ENCODE measurements at regions of chr11 and their contacts with region 1.

Region 1: GRCh38 chr11:111878849-111879636 is at the starts of genes CFAP68 and FDXACB1:
- DNase-seq: peak; percentile 97
- ATAC-seq: peak; percentile 95
- H3K4me3 ChIP-seq: peak within 1 kb of the TSS; percentile 71
- H3K27ac ChIP-seq: peak within 1 kb of the TSS; percentile 88
- H3K4me1 ChIP-seq: peaks cover 3% of the 10 kb centered on the region; the same call in 1 of the 2 replicates
- H3K27me3 ChIP-seq: no peaks in the 10 kb centered on the region
- CTCF ChIP-seq: peak; percentile 99
- POLR2A ChIP-seq: peak; percentile 34; the same call in 1 of the 2 replicates
- RAD21 ChIP-seq: peak; percentile 97
- total RNA-seq, gene CFAP68: 8.9 and 10.2 TPM in 2 replicates
- total RNA-seq, gene FDXACB1: 3.0 and 3.3 TPM in 2 replicates

Region 2: DNA sequence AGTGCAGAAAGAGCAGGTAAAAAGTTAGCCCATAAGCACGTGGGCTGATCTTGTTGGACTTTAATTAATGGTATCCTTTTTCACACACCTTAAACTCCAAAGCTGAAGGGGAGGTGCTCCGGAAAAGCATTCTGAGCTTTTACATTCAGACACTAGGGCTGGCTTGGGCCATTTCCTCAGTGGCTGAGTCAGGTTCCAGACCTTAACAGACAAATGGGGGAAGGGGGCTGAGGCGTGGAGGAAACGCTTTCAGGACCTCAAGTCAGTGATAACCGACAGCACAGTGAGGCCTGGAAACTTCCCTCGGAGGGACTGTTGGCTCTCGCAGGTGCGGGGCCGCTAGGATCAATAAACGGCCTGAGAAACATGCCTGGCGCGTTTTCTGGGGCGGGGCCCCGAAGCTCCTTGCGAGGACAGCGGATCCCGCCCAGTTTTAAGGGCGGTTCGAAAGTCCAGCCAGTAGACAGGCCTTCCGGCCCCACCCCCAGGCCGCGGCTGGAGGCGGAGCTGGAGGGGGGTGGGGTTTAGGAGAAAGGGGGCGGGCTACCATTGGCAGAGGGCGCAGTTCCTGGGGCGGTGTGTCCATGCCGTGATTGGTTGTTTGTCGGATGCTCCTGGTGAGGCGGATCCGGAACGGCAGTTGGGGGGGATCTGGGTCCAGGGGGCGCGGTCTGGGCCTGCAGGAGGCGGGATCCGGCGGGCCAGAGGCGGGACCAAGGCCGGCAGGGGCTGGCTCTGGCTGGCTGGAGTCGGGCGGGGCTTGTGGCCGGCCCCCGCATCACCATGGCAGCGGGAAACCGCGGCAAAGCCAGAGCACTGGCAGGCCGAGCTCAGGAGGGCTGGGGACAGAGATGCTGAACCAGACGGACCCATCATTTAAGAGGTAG is 47.7 kb after region 1 on chr11:
- CTCF ChIA-PET with region 1: interaction called, 5 read pairs
- POLR2A ChIA-PET with region 1: no interaction called
- dilution Hi-C with region 1: no loop called
- in situ Hi-C with region 1: loop called (anchors 5 kb)
- intact Hi-C with region 1: loop called (anchors 2 kb)
- DNase-seq: peak; percentile 96
- ATAC-seq: peak; percentile 95
- H3K4me3 ChIP-seq: peak overlapping the region; percentile 46
- H3K27ac ChIP-seq: peak overlapping the region; percentile 79
- H3K4me1 ChIP-seq: peaks cover 12% of the 10 kb centered on the region
- H3K27me3 ChIP-seq: no peaks in the 10 kb centered on the region
- CTCF ChIP-seq: no peak
- POLR2A ChIP-seq: peak; percentile 74
- RAD21 ChIP-seq: no peak

Region 3: GRCh38 chr11:111938687-111939160 is 59.7 kb after region 1 on chr11:
- CTCF ChIA-PET with region 1: no interaction called
- POLR2A ChIA-PET with region 1: no interaction called
- dilution Hi-C with region 1: no loop called
- in situ Hi-C with region 1: no loop called
- intact Hi-C with region 1: loop called (anchors 2 kb)
- DNase-seq: peak; percentile 63
- ATAC-seq: peak; percentile 40
- H3K4me3 ChIP-seq: peak overlapping the region; percentile 1; the same call in 1 of the 2 replicates
- H3K27ac ChIP-seq: peak overlapping the region; percentile 53
- H3K4me1 ChIP-seq: peaks cover 28% of the 10 kb centered on the region
- H3K27me3 ChIP-seq: no peaks in the 10 kb centered on the region
- CTCF ChIP-seq: no peak
- POLR2A ChIP-seq: peak; percentile 44; the same call in 1 of the 2 replicates
- RAD21 ChIP-seq: no peak

Region 4: GRCh38 chr11:111992206-111992855 is 113.3 kb after region 1 on chr11:
- CTCF ChIA-PET with region 1: interaction called, 3 read pairs
- POLR2A ChIA-PET with region 1: no interaction called
- dilution Hi-C with region 1: no loop called
- in situ Hi-C with region 1: loop called (anchors 5 kb)
- intact Hi-C with region 1: loop called (anchors 1 kb)
- DNase-seq: no peak
- ATAC-seq: no peak
- H3K4me3 ChIP-seq: no peak overlapping the region
- H3K27ac ChIP-seq: no peak overlapping the region
- H3K4me1 ChIP-seq: peaks cover 2% of the 10 kb centered on the region
- H3K27me3 ChIP-seq: no peaks in the 10 kb centered on the region
- CTCF ChIP-seq: no peak
- POLR2A ChIP-seq: no peak
- RAD21 ChIP-seq: no peak

Region 5: DNA sequence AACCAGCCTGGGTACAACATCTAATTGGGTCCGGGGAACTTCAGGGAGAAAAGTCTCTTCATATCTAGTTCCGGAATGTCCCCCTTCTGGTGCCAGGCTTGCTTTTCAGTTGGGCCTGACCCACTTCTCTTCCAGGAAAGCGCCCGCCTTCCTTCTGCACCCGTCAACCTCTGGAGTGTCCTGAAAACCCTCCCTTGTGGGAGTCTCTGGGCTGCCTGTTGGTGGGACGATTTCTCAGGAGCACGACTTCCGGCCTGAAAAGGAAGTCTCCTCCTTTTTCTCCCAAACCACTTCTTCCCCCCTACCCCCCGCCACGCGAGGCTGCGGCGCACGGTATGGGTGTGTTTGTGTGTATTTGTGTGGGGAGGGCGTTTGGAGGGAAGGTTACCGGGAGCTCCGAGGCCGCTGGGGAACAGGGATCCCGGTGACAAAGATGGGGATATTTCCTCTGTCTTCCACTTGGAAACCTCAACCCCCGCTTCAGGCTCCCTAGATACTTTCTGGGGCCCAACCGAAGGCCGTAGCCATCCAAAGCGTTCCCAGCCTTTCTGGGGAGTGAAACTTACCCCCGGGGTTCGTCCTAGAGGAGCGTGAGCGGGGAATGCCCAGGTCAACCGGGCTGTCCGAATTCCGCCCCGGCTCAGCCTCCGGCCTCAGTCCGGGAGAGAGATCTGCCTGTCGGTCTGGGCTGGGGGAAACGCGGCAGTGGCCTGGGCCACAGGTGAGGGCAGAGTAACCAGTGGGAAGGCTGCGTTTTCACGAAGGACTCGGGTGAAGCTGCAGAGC is 195.2 kb after region 1 on chr11 and contains the start of gene NKAPD1:
- CTCF ChIA-PET with region 1: no interaction called
- POLR2A ChIA-PET with region 1: no interaction called
- dilution Hi-C with region 1: no loop called
- in situ Hi-C with region 1: no loop called
- intact Hi-C with region 1: loop called (anchors 2 kb)
- DNase-seq: peak; percentile 88
- ATAC-seq: peak; percentile 94
- H3K4me3 ChIP-seq: peak within 1 kb of the TSS; percentile 80
- H3K27ac ChIP-seq: peak within 1 kb of the TSS; percentile 85
- H3K4me1 ChIP-seq: no peaks in the 10 kb centered on the region
- H3K27me3 ChIP-seq: no peaks in the 10 kb centered on the region
- CTCF ChIP-seq: no peak
- POLR2A ChIP-seq: no peak
- RAD21 ChIP-seq: no peak
- total RNA-seq, gene NKAPD1: 17.2 and 24.4 TPM in 2 replicates

Region 6: DNA sequence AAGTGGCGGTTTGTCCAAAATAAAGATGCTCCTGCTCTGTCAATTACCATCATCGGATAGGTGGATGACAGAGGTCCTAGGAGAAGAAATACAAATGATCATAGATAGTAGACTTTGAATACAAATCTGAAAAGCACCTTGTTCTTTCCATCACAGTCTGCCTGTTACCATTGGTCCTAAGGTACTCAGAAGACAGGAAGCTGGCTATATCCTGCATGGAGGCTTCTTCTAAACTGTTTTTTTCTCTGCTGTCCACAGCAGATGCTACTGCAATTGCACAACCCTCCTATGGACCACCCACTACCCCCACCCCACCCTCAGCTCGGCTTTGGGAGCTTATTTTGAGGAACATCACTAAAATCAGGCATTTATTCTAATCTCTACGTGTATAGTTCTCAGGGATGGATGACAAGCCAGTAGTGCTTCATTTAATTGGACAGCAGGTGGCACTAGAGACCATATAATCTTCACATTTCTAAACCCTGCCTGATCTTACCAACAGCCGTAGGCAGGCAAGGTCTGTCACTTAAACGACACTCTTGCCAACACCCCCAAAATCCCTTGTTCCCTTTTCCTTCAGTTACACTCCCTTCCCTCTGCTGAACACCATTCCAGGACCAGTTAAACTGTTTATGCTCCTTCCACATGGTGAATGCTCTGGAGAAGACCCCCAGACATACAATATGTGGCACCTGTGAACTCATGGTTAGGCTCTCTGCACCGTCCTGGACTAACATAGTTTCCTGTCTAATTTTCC is 340.6 kb after region 1 on chr11:
- CTCF ChIA-PET with region 1: no interaction called
- POLR2A ChIA-PET with region 1: no interaction called
- dilution Hi-C with region 1: no loop called
- in situ Hi-C with region 1: no loop called
- intact Hi-C with region 1: loop called (anchors 10 kb)
- DNase-seq: peak; percentile 81
- ATAC-seq: peak; percentile 84
- H3K4me3 ChIP-seq: no peak overlapping the region
- H3K27ac ChIP-seq: no peak overlapping the region
- H3K4me1 ChIP-seq: peaks cover 19% of the 10 kb centered on the region
- H3K27me3 ChIP-seq: no peaks in the 10 kb centered on the region
- CTCF ChIP-seq: peak; percentile 90
- POLR2A ChIP-seq: no peak
- RAD21 ChIP-seq: peak; percentile 92